Endothelial cell of umbilical vein (primary cell): ENCODE measurements at regions of chr15 and their contacts with region 1.

Region 1: DNA sequence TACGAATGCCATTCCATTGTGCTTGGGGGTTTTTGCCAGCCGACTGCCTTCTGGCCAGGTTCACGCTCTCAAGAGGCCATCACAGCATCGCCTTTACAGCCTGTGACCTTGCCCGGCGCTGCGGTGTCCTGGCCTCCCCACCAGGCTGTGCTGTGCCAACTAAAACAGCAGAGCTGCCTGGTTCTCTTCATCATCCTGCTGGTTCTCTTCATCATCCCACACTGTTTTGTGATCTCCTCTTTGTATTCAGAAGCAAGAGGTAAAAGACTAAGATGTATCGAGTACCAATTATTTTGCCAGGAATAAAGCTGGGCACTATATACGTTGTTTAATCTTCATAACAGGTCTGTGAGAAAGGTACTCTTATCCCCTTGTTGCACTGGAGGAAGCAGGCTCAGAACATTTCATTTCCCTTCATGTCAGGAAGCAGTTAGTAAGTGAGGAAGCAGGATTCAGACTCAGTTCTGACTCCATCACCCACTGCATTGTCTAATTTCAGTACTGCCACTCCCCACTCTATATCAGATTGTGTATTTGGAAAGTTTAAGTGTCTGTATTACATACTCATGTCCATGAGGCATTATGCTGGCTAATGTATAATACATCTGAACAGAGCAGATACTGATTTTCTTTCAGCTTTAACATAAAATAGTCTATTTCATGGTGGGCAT is 92.7 kb downstream of the LRRC28 start:
- DNase-seq: peak; percentile 75
- H3K4me3 ChIP-seq: no peak overlapping the region
- H3K27ac ChIP-seq: peak overlapping the region; percentile 13
- H3K4me1 ChIP-seq: peaks cover 14% of the 10 kb centered on the region
- H3K27me3 ChIP-seq: no peaks in the 10 kb centered on the region
- CTCF ChIP-seq: peak; percentile 68 to 70
- POLR2A ChIP-seq: no peak

Region 2: GRCh38 chr15:99230867-99231266 is 113.1 kb before region 1 on chr15:
- CTCF ChIA-PET with region 1: no interaction called
- POLR2A ChIA-PET with region 1: no interaction called
- dilution Hi-C with region 1: no loop called
- intact Hi-C with region 1: no loop called
- DNase-seq: no peak
- H3K4me3 ChIP-seq: no peak overlapping the region
- H3K27ac ChIP-seq: no peak overlapping the region
- H3K4me1 ChIP-seq: no peaks in the 10 kb centered on the region
- H3K27me3 ChIP-seq: no peaks in the 10 kb centered on the region
- CTCF ChIP-seq: no peak
- POLR2A ChIP-seq: no peak

Region 3: DNA sequence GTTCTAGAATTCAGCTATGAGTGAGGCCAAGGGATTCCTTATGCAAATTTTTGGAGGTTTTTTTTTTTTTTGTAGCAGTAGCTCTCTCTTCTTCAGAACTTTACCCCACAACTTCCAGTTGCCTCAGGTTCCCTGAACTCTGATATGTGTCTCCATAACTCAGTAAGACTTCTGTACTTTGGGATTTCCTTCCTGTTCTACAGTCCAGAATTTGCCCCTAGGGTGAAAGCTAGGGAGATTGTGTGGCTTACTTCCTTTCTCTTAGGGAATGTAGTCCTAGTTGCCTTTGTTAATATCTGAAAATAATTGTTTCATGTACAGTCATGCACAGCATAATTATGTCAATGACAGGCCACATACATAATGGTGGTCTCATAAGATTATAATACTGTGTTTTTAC is 61.9 kb before region 1 on chr15:
- CTCF ChIA-PET with region 1: interaction called, 3 read pairs
- POLR2A ChIA-PET with region 1: no interaction called
- dilution Hi-C with region 1: no loop called
- intact Hi-C with region 1: loop called (anchors 5 kb)
- DNase-seq: peak; percentile 12
- H3K4me3 ChIP-seq: no peak overlapping the region
- H3K27ac ChIP-seq: no peak overlapping the region
- H3K4me1 ChIP-seq: peaks cover 15% of the 10 kb centered on the region
- H3K27me3 ChIP-seq: no peaks in the 10 kb centered on the region
- CTCF ChIP-seq: no peak
- POLR2A ChIP-seq: no peak

Region 4: DNA sequence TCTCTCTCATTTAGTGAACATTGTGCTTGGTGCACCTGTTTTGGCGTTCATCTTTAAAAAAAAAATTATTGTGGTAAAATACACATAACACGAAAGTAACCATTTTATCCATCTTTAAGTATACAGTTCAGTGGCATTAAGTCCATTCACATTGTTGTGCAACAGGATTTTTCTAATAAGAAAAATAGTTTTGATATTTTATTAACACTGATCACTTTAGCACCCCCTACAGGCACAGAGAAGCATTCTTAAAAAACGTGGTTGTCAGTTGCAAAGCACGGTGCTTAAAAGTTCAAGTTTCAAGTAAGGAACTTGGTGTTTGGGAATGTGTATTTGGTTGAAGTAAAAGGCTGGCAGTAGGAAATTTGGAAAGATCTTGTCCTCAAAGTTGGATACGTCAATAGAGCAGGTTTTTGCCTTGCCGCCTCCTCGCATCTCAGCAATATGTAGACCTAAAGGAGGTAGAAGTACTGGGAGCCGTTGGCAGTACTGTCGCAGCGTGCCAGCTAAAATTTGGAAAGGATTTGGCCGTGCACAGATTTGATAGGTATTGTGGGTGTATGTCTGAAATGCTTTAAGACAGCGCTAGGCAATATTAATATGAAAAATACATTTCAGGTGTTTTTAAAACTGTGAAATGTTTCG is 17.6 kb after region 1 on chr15:
- CTCF ChIA-PET with region 1: interaction called, 15 read pairs
- POLR2A ChIA-PET with region 1: no interaction called
- dilution Hi-C with region 1: no loop called
- intact Hi-C with region 1: no loop called
- DNase-seq: peak; percentile 18
- H3K4me3 ChIP-seq: no peak overlapping the region
- H3K27ac ChIP-seq: no peak overlapping the region
- H3K4me1 ChIP-seq: no peaks in the 10 kb centered on the region
- H3K27me3 ChIP-seq: no peaks in the 10 kb centered on the region
- CTCF ChIP-seq: peak; percentile 48
- POLR2A ChIP-seq: no peak

Region 5: DNA sequence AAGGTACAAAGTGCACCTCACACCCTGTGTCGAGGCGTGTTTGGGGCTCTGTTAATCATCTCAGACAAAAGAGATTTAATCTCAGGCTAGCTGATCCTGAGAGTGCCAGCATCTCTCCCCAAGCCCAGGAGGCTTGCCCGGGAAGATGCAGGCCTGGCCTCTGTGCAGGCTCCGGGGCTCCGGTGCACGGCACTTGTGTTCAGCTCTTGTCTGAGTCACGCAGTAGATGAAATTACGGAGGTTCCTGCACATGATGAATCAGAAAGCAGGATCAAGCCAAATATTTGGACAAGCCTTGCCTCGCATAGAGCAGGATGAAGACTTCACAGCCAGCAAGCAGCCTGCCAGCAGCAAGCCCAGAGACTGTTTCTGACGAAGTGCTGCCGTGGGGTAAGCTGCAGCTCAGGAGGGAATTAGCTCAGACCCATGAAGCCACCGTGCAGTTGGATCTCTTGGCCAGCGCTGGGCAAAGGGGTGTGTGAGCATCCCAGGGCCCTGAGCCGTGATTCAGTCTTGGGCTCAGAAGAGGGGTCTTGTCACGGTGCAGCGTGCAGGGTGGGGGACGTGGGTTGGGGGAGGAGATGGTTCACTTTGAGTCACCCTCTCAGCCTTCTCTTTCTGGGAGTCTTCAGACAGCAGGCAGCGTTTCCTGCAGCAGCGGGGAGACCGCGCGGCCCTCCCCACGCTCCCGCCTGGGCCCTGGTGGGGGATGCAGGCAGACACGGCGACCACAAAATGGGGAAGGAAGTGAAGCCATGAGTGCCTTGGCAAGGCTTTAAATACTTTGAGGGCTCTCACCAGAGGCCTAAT is 132.6 kb after region 1 on chr15:
- CTCF ChIA-PET with region 1: no interaction called
- POLR2A ChIA-PET with region 1: no interaction called
- dilution Hi-C with region 1: no loop called
- intact Hi-C with region 1: no loop called
- DNase-seq: peak; percentile 84
- H3K4me3 ChIP-seq: no peak overlapping the region
- H3K27ac ChIP-seq: peak overlapping the region; percentile 36
- H3K4me1 ChIP-seq: peaks cover 17% of the 10 kb centered on the region
- H3K27me3 ChIP-seq: no peaks in the 10 kb centered on the region
- CTCF ChIP-seq: no peak
- POLR2A ChIP-seq: no peak

Region 6: DNA sequence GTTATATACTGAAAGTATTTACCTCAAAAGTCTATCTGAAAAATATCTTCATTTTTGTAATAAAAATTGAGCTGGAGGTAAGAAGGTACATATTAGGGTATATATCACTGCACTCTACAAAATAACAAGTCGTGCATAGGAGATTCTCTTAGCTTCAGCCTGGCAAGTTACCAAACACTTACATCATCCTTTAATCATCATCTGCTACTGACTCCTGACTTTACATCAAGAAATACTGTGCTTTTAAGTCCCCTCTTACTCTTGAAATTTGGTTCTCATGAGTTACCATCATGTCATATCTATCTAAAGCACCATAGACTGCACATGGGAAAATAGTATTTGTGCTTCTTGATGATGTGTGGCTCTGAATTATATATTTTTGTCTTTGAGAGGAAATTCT is 338.4 kb after region 1 on chr15:
- CTCF ChIA-PET with region 1: interaction called, 5 read pairs
- POLR2A ChIA-PET with region 1: no interaction called
- dilution Hi-C with region 1: no loop called
- intact Hi-C with region 1: loop called (anchors 5 kb)
- DNase-seq: peak; percentile 94
- H3K4me3 ChIP-seq: peak overlapping the region in 1 of 3 experiments; percentile 41
- H3K27ac ChIP-seq: peak overlapping the region; percentile 95
- H3K4me1 ChIP-seq: peaks cover 23% of the 10 kb centered on the region
- H3K27me3 ChIP-seq: no peaks in the 10 kb centered on the region
- CTCF ChIP-seq: no peak
- POLR2A ChIP-seq: no peak

Region 7: DNA sequence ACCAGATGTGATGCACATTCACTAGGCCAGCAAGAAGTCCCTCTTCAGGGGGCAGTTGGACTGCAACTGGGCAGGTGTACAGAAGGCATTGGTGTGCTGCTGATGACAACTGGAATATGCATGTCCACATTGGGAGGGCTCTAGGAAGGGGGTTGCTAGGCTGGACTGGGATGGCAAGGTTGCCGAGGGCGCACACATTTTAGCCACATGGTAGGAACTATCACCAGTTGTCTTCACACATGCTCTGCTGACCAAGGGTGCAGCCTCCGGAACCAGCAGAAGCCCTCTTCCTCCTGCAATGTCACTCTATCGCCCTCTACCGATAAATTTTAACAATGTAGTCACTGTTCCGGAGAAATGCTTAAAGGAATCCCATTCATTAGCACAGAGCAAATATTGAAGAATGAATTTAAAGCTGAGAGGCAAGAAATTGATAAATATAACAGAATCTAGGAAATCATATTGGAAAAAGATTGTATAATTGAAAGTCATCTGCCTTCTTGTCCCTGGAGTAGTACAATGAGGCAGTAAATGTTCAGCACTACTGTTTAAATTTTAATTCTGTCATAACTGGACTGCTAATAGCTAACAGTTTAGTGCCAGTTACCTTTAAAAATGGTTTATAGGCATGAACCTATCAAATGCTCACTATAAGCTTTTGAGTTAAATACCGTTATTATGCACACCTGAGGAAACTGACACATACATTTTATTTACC is 411.8 kb after region 1 on chr15:
- CTCF ChIA-PET with region 1: interaction called, 4 read pairs
- POLR2A ChIA-PET with region 1: no interaction called
- dilution Hi-C with region 1: no loop called
- intact Hi-C with region 1: loop called (anchors 5 kb)
- DNase-seq: peak; percentile 73
- H3K4me3 ChIP-seq: no peak overlapping the region
- H3K27ac ChIP-seq: no peak overlapping the region
- H3K4me1 ChIP-seq: no peaks in the 10 kb centered on the region
- H3K27me3 ChIP-seq: no peaks in the 10 kb centered on the region
- CTCF ChIP-seq: peak; percentile 67 to 68
- POLR2A ChIP-seq: no peak